T-cell (primary cell): ENCODE measurements at regions of chr17 and their contacts with region 1.

Region 1: DNA sequence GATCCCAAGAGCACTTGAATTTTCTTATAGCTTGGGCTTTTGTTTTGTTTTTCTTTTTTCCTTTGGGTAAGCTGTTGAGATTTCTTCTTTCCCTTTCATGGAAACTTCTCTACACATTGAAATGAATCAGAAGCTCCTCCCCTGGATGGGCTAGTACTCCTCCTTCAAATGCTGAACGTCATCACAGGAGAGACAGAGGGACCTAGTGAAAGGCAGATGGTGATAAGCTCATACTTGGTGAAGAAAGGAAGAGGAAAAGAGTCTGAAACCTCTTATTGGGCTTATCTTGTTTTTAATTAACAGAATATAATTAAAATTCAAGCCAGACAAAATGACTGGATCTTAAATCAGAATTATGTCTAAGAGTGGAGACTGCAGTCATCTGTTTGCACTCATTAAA is 147.3 kb downstream of the SNX11 start:
- DNase-seq: no peak
- ATAC-seq: no peak
- H3K4me3 ChIP-seq: no peak overlapping the region
- H3K4me3 Mint-ChIP-seq: no peak overlapping the region
- H3K27ac ChIP-seq: no peak overlapping the region
- H3K27ac Mint-ChIP-seq: peak overlapping the region in 1 of 2 donors; percentile 45
- H3K4me1 ChIP-seq: no peaks in the 10 kb centered on the region
- H3K4me1 Mint-ChIP-seq: peaks cover 0 to 7% (median 4%) of the 10 kb centered on the region in 3 donors
- H3K27me3 ChIP-seq: no peaks in the 10 kb centered on the region
- H3K27me3 Mint-ChIP-seq: no peaks in the 10 kb centered on the region

Region 2: GRCh38 chr17:50026901-50027630 is 1772.2 kb after region 1 on chr17:
- CTCF ChIA-PET with region 1: no interaction called
- POLR2A ChIA-PET with region 1: interaction called in 1 of 2 experiments, 12 read pairs
- DNase-seq: peak; percentile 23 to 86 (median 64)
- ATAC-seq: peak; percentile 73 to 81 (median 78)
- H3K4me3 ChIP-seq: peak overlapping the region in 1 of 2 donors; percentile 23
- H3K4me3 Mint-ChIP-seq: peak overlapping the region in 2 of 3 donors; percentile 5 to 53
- H3K27ac ChIP-seq: no peak overlapping the region
- H3K27ac Mint-ChIP-seq: peak overlapping the region in 1 of 2 donors; percentile 16
- H3K4me1 ChIP-seq: peaks cover 0 to 11% of the 10 kb centered on the region in 2 experiments
- H3K4me1 Mint-ChIP-seq: peaks cover 11 to 17% (median 16%) of the 10 kb centered on the region in 3 donors
- H3K27me3 ChIP-seq: peaks cover 0 to 40% of the 10 kb centered on the region in 2 experiments
- H3K27me3 Mint-ChIP-seq: peaks cover 22 to 24% of the 10 kb centered on the region in 2 donors